ENCODE measurements at regions of chr15 and their contacts with region 1.

Region 1: DNA sequence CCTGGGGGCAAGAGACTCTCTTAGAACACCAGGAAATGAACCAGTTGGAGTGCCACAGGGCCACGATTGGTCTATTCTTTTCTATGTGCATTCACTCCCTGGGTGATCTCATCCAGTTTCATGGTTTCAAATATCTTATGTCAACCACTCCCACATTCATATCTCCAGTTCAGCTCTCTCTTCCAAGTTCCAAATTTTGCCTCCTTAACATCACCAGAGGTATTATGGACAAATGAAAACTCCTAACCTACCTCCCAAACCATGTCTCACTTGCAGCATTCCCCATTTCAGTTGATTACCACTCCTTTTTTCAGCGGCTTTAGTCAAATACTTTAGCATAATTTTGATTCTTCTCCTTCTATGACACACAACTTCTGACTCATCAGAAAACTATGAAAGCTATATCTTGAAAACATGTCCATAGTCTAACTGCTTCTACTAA is 203.1 kb upstream of the SEMA6D start:
- DNase-seq: no peak
- H3K4me3 ChIP-seq: no peak overlapping the region
- H3K27ac ChIP-seq: no peak overlapping the region
- H3K4me1 ChIP-seq: no peaks in the 10 kb centered on the region
- H3K27me3 ChIP-seq: no peaks in the 10 kb centered on the region
- CTCF ChIP-seq: no peak
- POLR2A ChIP-seq: no peak

Region 2: DNA sequence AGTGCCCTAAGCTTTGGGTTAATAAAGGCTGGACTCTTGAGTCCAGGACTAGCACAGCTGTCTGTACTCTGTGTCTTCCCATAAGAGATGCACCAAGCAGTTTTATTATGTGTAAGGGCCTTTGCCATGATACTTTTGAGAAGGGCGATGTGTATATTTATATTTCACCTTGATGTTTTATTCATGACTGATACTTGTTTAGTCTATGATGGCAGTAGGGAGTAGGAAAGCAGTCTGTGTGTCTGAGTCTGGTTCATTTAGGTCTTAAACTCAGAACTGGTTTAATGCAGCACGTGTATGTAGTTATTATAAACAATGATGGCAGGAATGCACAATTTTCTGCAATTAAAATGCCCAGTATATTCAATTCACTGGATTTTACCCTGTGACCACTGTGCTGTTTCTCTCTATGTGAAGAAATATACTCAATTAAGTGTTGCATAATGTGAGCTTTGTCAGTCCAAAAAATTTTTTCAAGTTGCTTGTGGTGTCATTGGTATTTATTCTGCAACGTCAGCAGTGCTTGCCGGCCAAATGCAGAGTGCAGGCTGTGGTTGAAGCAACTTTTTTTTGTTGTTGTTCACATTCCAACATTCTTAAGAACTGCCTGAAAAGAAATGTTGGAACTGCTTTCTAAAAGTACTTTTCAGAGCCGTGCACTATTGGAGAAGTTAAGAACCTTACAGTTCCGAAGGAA is 220.6 kb before region 1 on chr15:
- intact Hi-C with region 1: no loop called
- DNase-seq: peak; percentile 26
- H3K4me3 ChIP-seq: no peak overlapping the region
- H3K27ac ChIP-seq: no peak overlapping the region
- H3K4me1 ChIP-seq: no peaks in the 10 kb centered on the region
- H3K27me3 ChIP-seq: no peaks in the 10 kb centered on the region
- CTCF ChIP-seq: no peak
- POLR2A ChIP-seq: no peak

Region 3: GRCh38 chr15:47565949-47566348 is 51.7 kb after region 1 on chr15:
- intact Hi-C with region 1: loop called (anchors 10 kb)
- DNase-seq: no peak
- H3K4me3 ChIP-seq: no peak overlapping the region
- H3K27ac ChIP-seq: no peak overlapping the region
- H3K4me1 ChIP-seq: no peaks in the 10 kb centered on the region
- H3K27me3 ChIP-seq: no peaks in the 10 kb centered on the region
- CTCF ChIP-seq: no peak
- POLR2A ChIP-seq: no peak

Region 4: GRCh38 chr15:47689660-47690059 is 175.4 kb after region 1 on chr15:
- intact Hi-C with region 1: no loop called
- DNase-seq: no peak
- H3K4me3 ChIP-seq: no peak overlapping the region
- H3K27ac ChIP-seq: no peak overlapping the region
- H3K4me1 ChIP-seq: no peaks in the 10 kb centered on the region
- H3K27me3 ChIP-seq: no peaks in the 10 kb centered on the region
- CTCF ChIP-seq: no peak
- POLR2A ChIP-seq: no peak

Measured in prostate gland (tissue), 2 donors.